ENCODE measurements at regions of chr7 and their contacts with region 1.

Region 1: GRCh38 chr7:35906191-35906908 is 105.5 kb downstream of the SEPTIN7 start:
- DNase-seq: peak; percentile 53 to 60
- H3K4me3 ChIP-seq: no peak overlapping the region
- H3K27ac ChIP-seq: peak overlapping the region in 1 of 3 donors; percentile 1
- H3K4me1 ChIP-seq: peaks cover 0 to 6% of the 10 kb centered on the region in 2 donors
- H3K27me3 ChIP-seq: no peaks in the 10 kb centered on the region
- CTCF ChIP-seq: peak; percentile 69 to 97 (median 92)
- POLR2A ChIP-seq: no peak

Region 2: DNA sequence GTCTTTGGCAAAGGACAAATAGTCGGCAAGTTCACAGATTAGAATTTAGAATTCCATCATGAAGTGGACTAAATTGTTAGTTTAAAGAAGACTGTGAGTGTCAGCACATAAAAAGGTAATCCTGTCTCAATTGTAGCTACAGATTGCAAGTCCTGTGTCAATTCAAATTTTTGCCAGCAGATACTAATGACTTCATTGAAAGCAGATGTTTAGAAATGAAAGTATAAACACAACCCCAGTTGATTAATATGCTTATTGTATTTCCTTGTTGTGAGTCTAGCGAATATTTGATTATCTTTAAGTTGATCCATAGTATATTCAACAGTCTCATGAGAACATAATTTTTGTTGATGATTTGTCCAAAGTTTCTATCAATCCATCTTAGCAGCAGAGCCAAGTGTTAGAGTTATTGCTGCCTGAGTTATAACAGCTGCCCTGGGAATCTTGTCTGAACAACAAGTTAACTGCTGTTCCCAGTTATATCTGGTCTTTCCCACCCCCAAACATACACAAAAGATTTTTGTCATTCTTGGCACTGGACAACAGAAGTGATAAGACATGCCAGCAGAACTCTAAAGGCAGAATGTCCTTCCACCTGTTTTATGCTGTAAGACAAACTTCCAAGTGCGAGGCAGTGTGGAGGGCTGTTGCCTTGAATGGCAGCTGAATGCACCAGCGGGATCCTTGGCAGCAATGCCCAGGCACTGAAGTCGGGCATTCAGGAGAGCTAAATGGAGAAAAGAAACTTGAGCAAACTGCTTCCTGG is 190.1 kb before region 1 on chr7:
- intact Hi-C with region 1: loop called (anchors 5 kb)
- DNase-seq: peak; percentile 62 to 77
- H3K4me3 ChIP-seq: no peak overlapping the region
- H3K27ac ChIP-seq: no peak overlapping the region
- H3K4me1 ChIP-seq: peaks cover 5 to 6% of the 10 kb centered on the region in 2 donors
- H3K27me3 ChIP-seq: no peaks in the 10 kb centered on the region
- CTCF ChIP-seq: no peak
- POLR2A ChIP-seq: no peak

Region 3: GRCh38 chr7:35781200-35781701 is 125.1 kb before region 1 on chr7:
- intact Hi-C with region 1: no loop called
- DNase-seq: no peak
- H3K4me3 ChIP-seq: no peak overlapping the region
- H3K27ac ChIP-seq: no peak overlapping the region
- H3K4me1 ChIP-seq: no peaks in the 10 kb centered on the region
- H3K27me3 ChIP-seq: no peaks in the 10 kb centered on the region
- CTCF ChIP-seq: no peak
- POLR2A ChIP-seq: no peak

Region 4: DNA sequence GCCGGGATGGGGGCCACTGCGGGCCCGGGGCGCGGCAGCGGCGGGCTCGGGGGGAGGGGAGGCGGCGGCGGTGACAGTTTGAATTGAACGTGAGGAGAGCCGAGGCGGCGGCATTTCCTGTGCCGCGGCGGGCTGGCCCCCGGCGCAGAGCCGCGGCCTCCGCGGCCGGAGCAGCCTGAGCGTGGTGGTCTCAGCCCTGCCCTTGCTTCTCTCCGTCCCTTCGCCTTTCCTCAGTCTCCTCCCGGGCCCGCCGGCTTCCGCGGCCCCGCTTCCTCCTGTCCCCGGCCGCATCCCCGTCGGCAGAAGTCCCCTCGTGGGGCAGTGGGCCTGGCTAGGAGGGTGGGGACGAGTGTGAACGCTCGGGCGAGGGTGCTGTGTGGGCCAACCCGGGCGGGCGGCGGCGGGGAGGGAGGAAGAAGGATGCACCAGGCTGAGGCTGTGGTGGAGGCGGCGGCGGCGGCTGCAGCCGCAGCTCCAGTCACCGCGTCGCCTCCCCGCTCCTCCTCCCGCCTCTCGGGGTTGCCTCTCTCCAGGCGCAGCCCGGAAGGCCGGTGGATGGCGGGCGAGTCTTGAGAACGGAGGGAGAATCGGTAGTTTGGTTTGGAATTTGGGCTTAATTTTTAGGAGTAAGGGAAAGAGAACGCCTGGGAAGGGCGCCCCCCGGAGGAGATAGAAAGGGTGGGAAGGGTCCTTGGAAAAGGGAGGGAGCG is 104.8 kb before region 1 on chr7:
- intact Hi-C with region 1: loop called (anchors 10 kb)
- DNase-seq: peak; percentile 68 to 70
- H3K4me3 ChIP-seq: peak overlapping the region; percentile 64 to 92 (median 90)
- H3K27ac ChIP-seq: peak overlapping the region; percentile 91 to 98 (median 96)
- H3K4me1 ChIP-seq: peaks cover 15 to 19% of the 10 kb centered on the region in 2 donors
- H3K27me3 ChIP-seq: no peaks in the 10 kb centered on the region
- CTCF ChIP-seq: peak in 5 of 6 experiments; percentile 33 to 58 (median 45)
- POLR2A ChIP-seq: peak in 1 of 2 donors; percentile 23

Region 5: GRCh38 chr7:35869810-35870209 is 36.5 kb before region 1 on chr7:
- intact Hi-C with region 1: no loop called
- DNase-seq: no peak
- H3K4me3 ChIP-seq: no peak overlapping the region
- H3K27ac ChIP-seq: no peak overlapping the region
- H3K4me1 ChIP-seq: peaks cover 4% of the 10 kb centered on the region in 2 donors
- H3K27me3 ChIP-seq: no peaks in the 10 kb centered on the region
- CTCF ChIP-seq: no peak
- POLR2A ChIP-seq: no peak

Region 6: DNA sequence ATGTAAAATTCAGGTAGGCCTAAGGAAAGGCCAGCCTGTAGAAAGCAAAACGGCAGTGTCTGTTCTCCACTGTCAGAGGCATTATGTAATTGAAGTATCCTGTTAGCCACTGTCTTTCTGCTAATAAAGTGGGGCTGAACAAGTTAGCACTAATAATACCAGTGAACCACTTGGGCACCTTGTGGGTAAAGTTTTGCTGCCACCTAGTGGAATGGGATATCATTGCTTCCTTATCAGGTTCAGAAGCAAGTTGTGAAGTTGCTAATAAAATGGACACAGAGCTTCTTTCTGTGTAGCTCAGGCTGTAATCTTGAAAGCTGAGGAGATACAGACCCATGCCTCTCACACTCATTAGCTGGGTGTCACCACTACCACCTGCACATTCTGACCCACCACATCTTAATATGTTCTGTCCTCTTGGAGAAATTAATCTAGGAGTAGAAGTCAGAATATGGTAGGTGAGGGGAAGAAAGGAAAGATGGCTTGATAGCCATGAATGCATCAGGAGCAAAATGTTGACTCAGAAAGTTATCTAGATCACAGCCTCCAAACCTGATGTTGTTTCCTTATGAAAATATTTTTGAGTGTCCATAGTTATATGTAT is 69.6 kb after region 1 on chr7:
- intact Hi-C with region 1: loop called (anchors 10 kb)
- DNase-seq: peak; percentile 31 to 46
- H3K4me3 ChIP-seq: no peak overlapping the region
- H3K27ac ChIP-seq: no peak overlapping the region
- H3K4me1 ChIP-seq: no peaks in the 10 kb centered on the region
- H3K27me3 ChIP-seq: no peaks in the 10 kb centered on the region
- CTCF ChIP-seq: peak; percentile 61 to 90 (median 83)
- POLR2A ChIP-seq: no peak

Measured in thyroid gland (tissue), 4 donors.